HEK293 (cell line): ENCODE measurements at regions of chr6 and their contacts with region 1.

Region 1: DNA sequence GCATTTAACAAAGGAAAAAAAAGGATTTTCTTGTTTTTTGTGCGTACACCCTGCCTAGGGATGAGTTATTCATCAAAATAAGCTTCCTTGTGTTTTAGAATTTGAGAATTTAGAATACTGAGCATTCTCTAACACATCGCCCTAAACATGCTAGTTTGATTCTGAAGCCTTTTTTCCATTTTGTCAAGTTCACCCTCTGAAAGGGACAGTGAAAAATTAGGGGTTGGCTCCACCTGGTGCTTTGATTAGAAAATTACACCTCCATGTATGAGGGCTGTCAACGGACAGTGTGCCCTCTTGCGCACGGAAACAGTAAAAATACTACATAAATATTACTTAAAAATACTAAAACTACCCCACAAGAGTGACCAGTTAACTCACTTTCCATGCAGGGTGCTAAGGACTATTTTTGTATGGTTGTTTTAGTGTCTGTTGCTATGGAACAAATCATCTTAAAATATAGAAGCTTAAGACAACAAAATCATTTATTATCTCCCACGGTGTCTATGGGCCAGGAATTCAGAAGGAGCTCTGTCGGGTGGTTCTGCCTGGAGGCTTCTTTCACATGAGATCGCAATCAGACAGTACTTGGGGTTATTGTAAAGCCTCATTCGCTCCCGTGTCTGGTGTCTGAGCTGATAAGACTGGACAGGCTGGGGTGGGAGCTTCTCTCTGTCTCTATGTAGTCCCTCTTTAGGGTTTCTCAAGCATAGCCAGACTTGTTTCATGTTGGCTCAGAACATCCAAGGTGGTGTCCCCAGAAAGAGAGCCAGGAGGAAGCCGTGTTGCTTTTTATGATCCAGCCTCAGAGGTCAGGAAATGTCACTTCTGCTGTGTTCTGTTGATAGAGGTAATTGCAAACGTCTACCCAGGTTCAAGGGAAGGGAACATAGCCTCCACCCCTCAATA is 41.1 kb upstream of the TMEM170B start:
- H3K4me3 ChIP-seq: no peak overlapping the region
- H3K27ac ChIP-seq: no peak overlapping the region
- H3K4me1 ChIP-seq: no peaks in the 10 kb centered on the region
- CTCF ChIP-seq: peak; percentile 83

Region 2: GRCh38 chr6:10954590-10955010 is 541.8 kb before region 1 on chr6:
- CTCF ChIA-PET with region 1: interaction called, 33 read pairs
- POLR2A ChIA-PET with region 1: no interaction called
- H3K4me3 ChIP-seq: no peak overlapping the region
- H3K27ac ChIP-seq: no peak overlapping the region
- H3K4me1 ChIP-seq: no peaks in the 10 kb centered on the region
- CTCF ChIP-seq: peak; percentile 80

Region 3: GRCh38 chr6:11163932-11164331 is 332.5 kb before region 1 on chr6:
- CTCF ChIA-PET with region 1: interaction called, 38 read pairs
- POLR2A ChIA-PET with region 1: no interaction called
- H3K4me3 ChIP-seq: no peak overlapping the region
- H3K27ac ChIP-seq: no peak overlapping the region
- H3K4me1 ChIP-seq: no peaks in the 10 kb centered on the region
- CTCF ChIP-seq: no peak

Region 4: DNA sequence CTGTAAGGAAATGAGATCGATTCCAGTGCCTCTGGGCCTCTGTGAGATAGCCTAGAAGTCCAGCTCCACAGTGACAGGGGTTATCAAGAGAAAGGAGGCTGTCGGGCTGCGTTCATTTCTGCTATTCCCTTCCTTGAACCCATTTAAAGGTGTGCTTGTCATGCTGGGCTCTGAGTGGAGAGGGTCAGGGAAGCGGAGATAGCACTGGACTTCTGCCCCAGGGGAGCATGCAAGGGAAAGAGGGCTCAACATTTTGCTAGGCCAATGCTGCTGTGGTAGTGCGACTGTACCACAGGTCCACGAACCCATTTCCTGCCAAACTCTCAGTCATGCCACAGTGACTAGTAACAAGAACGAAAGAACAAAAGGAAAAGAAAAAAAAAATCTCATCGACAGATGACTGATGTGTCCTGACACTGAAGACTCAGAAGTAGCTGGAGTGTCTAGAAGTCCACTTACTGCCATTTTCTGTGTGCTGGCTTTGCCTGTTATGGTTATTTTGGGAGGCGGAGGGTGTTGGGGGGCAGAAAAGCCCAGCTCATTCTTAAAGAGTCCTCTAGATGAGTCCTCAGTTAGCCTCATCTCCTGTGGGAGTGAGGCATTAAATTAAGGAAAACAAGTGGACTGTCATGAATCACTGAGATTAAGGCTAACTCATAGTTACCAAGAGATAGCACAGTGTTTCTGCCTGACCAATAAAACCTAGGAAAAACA is 272.0 kb before region 1 on chr6:
- CTCF ChIA-PET with region 1: interaction called, 16 read pairs
- POLR2A ChIA-PET with region 1: interaction called, 5 read pairs
- H3K4me3 ChIP-seq: no peak overlapping the region
- H3K27ac ChIP-seq: no peak overlapping the region
- H3K4me1 ChIP-seq: peaks cover 13% of the 10 kb centered on the region
- CTCF ChIP-seq: no peak

Region 5: DNA sequence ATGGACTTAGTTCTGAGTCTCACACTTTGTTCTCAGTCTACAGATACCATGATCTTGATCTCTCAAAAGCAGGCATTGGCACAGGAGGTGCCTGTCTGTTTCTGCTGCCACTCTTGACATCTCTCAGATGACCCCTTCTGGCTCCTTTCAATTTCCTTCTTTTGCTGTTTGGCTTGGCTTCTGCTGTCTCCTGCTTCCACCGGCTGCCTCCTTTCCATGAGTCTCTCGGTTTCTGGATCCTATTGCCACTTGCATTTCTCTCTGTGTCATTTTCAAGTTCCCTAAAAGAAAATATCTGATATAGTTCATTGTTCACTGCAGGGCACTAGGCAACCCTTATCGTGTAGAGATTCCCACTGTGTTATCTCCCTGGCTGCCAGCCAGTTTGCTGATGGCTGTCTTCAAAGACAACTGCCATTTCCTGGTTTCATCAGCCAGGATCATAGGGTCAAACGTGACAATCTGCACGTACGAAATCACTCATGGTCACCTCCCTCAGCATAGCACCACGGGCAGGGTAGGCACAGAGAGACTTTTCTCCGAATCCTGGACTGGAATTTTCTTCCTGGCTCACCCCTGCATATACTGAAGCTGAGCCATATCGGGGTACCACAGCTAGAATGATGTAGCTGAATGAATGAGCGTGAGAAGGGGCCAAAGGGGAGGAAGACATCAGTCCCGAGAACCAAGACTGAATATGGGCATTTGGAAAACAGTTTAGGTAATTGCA is 103.5 kb before region 1 on chr6:
- CTCF ChIA-PET with region 1: interaction called, 12 read pairs
- POLR2A ChIA-PET with region 1: no interaction called
- H3K4me3 ChIP-seq: no peak overlapping the region
- H3K27ac ChIP-seq: no peak overlapping the region
- H3K4me1 ChIP-seq: peaks cover 4% of the 10 kb centered on the region; the same call in 1 of the 2 replicates
- CTCF ChIP-seq: no peak

Region 6: DNA sequence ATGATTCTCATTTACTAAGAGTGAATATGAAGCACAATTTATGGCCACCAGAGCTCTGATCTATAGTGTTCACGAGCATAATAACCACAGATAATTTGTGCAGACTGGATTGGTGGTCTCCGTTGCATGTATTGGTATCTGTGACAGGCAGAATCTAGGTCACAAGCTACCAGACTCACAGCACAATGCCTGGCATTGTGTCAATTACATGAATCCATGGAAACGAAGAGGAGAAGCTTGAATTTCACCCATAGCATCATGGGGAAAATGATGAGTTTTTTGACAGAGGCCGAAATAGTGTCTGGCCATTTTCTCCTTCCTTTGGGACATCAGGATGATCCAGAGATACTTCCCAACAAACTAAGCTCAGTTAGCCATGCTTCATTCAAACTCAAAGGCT is 11.1 kb before region 1 on chr6:
- CTCF ChIA-PET with region 1: interaction called, 49 read pairs
- POLR2A ChIA-PET with region 1: no interaction called
- H3K4me3 ChIP-seq: no peak overlapping the region
- H3K27ac ChIP-seq: no peak overlapping the region
- H3K4me1 ChIP-seq: no peaks in the 10 kb centered on the region
- CTCF ChIP-seq: no peak

Region 7: GRCh38 chr6:11575408-11576033 is 79.1 kb after region 1 on chr6:
- CTCF ChIA-PET with region 1: interaction called, 82 read pairs
- POLR2A ChIA-PET with region 1: no interaction called
- H3K4me3 ChIP-seq: no peak overlapping the region
- H3K27ac ChIP-seq: no peak overlapping the region
- H3K4me1 ChIP-seq: no peaks in the 10 kb centered on the region
- CTCF ChIP-seq: peak; percentile 75

Region 8: DNA sequence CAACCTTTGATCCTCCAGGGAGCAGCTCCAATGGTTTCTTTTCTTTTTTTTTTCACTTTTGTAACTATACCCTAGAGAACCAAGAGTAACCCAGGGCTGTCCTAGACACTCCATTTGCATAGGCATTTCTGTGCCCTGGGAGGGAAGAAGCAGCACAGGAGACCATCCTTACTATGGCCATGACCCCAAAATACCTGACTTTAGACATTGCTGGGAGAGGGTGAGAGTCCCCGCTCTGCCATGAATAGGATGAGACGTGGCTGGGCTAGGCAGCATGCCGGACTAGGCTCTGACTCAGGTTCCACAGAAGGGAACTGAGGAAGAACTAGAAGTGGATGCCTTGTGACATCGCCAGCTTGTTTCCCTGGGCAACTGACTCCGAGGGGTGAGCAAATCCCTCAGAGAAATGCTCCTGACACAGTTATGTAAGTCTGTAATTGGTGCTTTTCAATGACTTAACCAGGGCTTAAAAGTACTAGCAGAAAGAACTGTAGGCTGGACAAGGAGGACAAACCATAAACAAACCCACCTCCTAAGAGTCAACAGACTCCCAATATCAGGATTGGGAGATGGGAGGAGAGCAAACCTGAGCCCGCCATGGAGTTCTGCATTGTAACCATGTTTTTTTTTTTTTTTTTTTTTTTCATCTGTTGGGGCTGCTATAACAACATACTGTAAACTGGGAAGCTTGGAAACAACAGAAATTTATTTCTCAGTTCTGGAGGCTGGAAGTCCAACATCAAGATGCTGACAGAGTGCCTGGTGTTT is 283.1 kb after region 1 on chr6:
- CTCF ChIA-PET with region 1: no interaction called
- POLR2A ChIA-PET with region 1: no interaction called
- H3K4me3 ChIP-seq: no peak overlapping the region
- H3K27ac ChIP-seq: no peak overlapping the region
- H3K4me1 ChIP-seq: peaks cover 4% of the 10 kb centered on the region; the same call in 1 of the 2 replicates
- CTCF ChIP-seq: no peak